ENCODE measurements at regions of chr11 and their contacts with region 1.

Region 1: GRCh38 chr11:65314501-65315203 is at the start of gene CDC42EP2:
- DNase-seq: peak; percentile 85
- ATAC-seq: peak; percentile 96
- H3K4me3 ChIP-seq: peak within 1 kb of the TSS; percentile 40 to 85 (median 81)
- H3K4me3 Mint-ChIP-seq: peak within 1 kb of the TSS; percentile 84
- H3K27ac ChIP-seq: peak within 1 kb of the TSS in 1 of 2 donors; percentile 51
- H3K27ac Mint-ChIP-seq: no peak within 1 kb of the TSS
- H3K4me1 ChIP-seq: peaks cover 8 to 17% of the 10 kb centered on the region in 2 donors
- H3K4me1 Mint-ChIP-seq: peaks cover 10% of the 10 kb centered on the region
- H3K27me3 ChIP-seq: peaks cover 0 to 12% (median 5%) of the 10 kb centered on the region in 4 experiments
- H3K27me3 Mint-ChIP-seq: peaks cover 9% of the 10 kb centered on the region
- CTCF ChIP-seq: no peak
- total RNA-seq, gene CDC42EP2: 1.1 and 1.5 TPM in 2 replicates

Region 2: GRCh38 chr11:65225279-65226102 is 89.2 kb before region 1 on chr11:
- CTCF ChIA-PET with region 1: interaction called, 50 read pairs
- POLR2A ChIA-PET with region 1: interaction called, 3 read pairs
- intact Hi-C with region 1: loop called (anchors 1 kb)
- DNase-seq: peak; percentile 73
- ATAC-seq: peak; percentile 81
- H3K4me3 ChIP-seq: peak overlapping the region; percentile 33 to 62 (median 45)
- H3K4me3 Mint-ChIP-seq: peak overlapping the region; percentile 91
- H3K27ac ChIP-seq: no peak overlapping the region
- H3K27ac Mint-ChIP-seq: no peak overlapping the region
- H3K4me1 ChIP-seq: peaks cover 14 to 17% of the 10 kb centered on the region in 2 donors
- H3K4me1 Mint-ChIP-seq: peaks cover 12% of the 10 kb centered on the region
- H3K27me3 ChIP-seq: no peaks in the 10 kb centered on the region
- H3K27me3 Mint-ChIP-seq: no peaks in the 10 kb centered on the region
- CTCF ChIP-seq: peak; percentile 69

Region 3: GRCh38 chr11:65274735-65275682 is 39.6 kb before region 1 on chr11:
- CTCF ChIA-PET with region 1: interaction called, 86 read pairs
- POLR2A ChIA-PET with region 1: interaction called, 5 read pairs
- intact Hi-C with region 1: loop called (anchors 1 kb)
- DNase-seq: peak; percentile 57
- ATAC-seq: peak; percentile 53
- H3K4me3 ChIP-seq: no peak overlapping the region
- H3K4me3 Mint-ChIP-seq: no peak overlapping the region
- H3K27ac ChIP-seq: no peak overlapping the region
- H3K27ac Mint-ChIP-seq: no peak overlapping the region
- H3K4me1 ChIP-seq: no peaks in the 10 kb centered on the region
- H3K4me1 Mint-ChIP-seq: no peaks in the 10 kb centered on the region
- H3K27me3 ChIP-seq: no peaks in the 10 kb centered on the region
- H3K27me3 Mint-ChIP-seq: no peaks in the 10 kb centered on the region
- CTCF ChIP-seq: peak; percentile 50

Region 4: GRCh38 chr11:65354265-65355012 is 39.8 kb after region 1 on chr11 and contains the start of gene TIGD3:
- CTCF ChIA-PET with region 1: interaction called, 5 read pairs
- POLR2A ChIA-PET with region 1: interaction called, 3 read pairs
- intact Hi-C with region 1: loop called (anchors 2 kb)
- DNase-seq: peak; percentile 97
- ATAC-seq: peak; percentile 96
- H3K4me3 ChIP-seq: peak within 1 kb of the TSS; percentile 26 to 79 (median 65)
- H3K4me3 Mint-ChIP-seq: peak within 1 kb of the TSS; percentile 95
- H3K27ac ChIP-seq: peak within 1 kb of the TSS in 1 of 2 donors; percentile 18
- H3K27ac Mint-ChIP-seq: peak within 1 kb of the TSS; percentile 92
- H3K4me1 ChIP-seq: peaks cover 11 to 16% of the 10 kb centered on the region in 2 donors
- H3K4me1 Mint-ChIP-seq: peaks cover 20% of the 10 kb centered on the region
- H3K27me3 ChIP-seq: no peaks in the 10 kb centered on the region
- H3K27me3 Mint-ChIP-seq: no peaks in the 10 kb centered on the region
- CTCF ChIP-seq: no peak
- total RNA-seq, gene TIGD3: 6.1 and 7.5 TPM in 2 replicates